WTC11 (cell line): ENCODE measurements at regions of chr1 and their contacts with region 1.

Region 1: DNA sequence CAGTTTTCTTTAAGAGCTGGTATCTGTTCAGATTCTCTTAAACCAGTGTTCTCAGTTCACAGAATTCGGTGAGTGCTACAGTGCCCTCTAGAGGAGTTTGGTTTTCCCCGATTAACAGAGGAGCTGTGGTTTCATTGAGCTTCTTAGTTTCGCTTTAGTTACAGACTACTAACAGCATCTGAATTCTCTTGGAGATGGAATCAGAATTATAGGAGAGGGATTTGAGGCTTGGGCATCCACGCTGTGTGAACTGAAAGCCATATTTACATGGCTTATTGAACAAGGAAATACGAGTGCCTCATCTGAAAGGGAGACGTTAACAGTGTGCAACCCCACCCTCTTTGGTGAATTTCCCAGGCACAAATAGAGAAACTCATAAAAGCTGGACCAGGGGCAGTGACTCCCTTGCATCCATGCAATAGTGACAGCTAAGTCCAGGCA is 202.0 kb downstream of the USH2A start:
- DNase-seq: peak; percentile 41
- ATAC-seq: peak; percentile 98
- H3K4me3 Mint-ChIP-seq: peak overlapping the region; percentile 56
- H3K27ac Mint-ChIP-seq: peak overlapping the region; percentile 80
- H3K4me1 Mint-ChIP-seq: peaks cover 15% of the 10 kb centered on the region
- H3K27me3 Mint-ChIP-seq: no peaks in the 10 kb centered on the region
- CTCF ChIP-seq: no peak

Region 2: GRCh38 chr1:216075339-216075738 is 145.9 kb before region 1 on chr1:
- CTCF ChIA-PET with region 1: no interaction called
- POLR2A ChIA-PET with region 1: no interaction called
- DNase-seq: no peak
- ATAC-seq: peak; percentile 82
- H3K4me3 Mint-ChIP-seq: no peak overlapping the region
- H3K27ac Mint-ChIP-seq: no peak overlapping the region; the same call in 1 of the 2 replicates
- H3K4me1 Mint-ChIP-seq: peaks cover 24% of the 10 kb centered on the region
- H3K27me3 Mint-ChIP-seq: no peaks in the 10 kb centered on the region
- CTCF ChIP-seq: no peak

Region 3: GRCh38 chr1:216175714-216176113 is 45.6 kb before region 1 on chr1:
- CTCF ChIA-PET with region 1: interaction called, 16 read pairs
- POLR2A ChIA-PET with region 1: no interaction called
- DNase-seq: peak; percentile 64
- ATAC-seq: peak; percentile 100
- H3K4me3 Mint-ChIP-seq: no peak overlapping the region
- H3K27ac Mint-ChIP-seq: no peak overlapping the region
- H3K4me1 Mint-ChIP-seq: peaks cover 19% of the 10 kb centered on the region
- H3K27me3 Mint-ChIP-seq: no peaks in the 10 kb centered on the region
- CTCF ChIP-seq: 0 out of 2 replicates have a peak, but pooled peaks have one; percentile 12

Region 4: GRCh38 chr1:216183007-216183406 is 38.3 kb before region 1 on chr1:
- CTCF ChIA-PET with region 1: interaction called, 17 read pairs
- POLR2A ChIA-PET with region 1: no interaction called
- DNase-seq: peak; percentile 15
- ATAC-seq: peak; percentile 95
- H3K4me3 Mint-ChIP-seq: no peak overlapping the region; the same call in 1 of the 2 replicates
- H3K27ac Mint-ChIP-seq: no peak overlapping the region
- H3K4me1 Mint-ChIP-seq: peaks cover 52% of the 10 kb centered on the region
- H3K27me3 Mint-ChIP-seq: no peaks in the 10 kb centered on the region
- CTCF ChIP-seq: no peak

Region 5: DNA sequence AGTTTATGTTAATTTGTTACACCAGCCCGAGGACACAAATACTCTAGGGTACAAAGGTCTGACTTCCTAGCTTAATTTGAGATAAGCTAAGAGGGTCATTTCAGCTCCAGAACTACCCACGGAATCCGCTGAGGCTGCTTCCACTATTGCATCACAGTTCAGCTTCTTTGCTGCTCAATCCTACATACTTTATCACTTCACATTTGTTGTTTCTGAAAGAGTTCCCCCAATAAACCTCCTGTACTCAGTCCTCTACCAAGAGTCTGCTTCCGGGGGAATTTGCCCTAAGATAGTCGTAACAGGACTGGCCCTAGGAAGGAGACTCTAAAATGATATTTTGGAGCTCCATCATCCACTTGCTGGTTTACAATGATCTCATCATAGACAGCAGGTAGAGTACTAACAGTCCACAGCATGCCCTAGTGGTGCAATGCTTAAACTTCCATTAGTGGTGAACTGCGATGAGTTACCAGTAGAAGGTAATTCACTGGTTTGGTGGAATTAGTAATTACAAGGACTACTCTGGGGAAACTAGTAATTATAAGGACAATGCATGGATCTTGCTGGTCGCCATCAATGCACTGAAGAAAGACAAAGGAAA is 27.3 kb before region 1 on chr1:
- CTCF ChIA-PET with region 1: interaction called, 22 read pairs
- POLR2A ChIA-PET with region 1: no interaction called
- DNase-seq: no peak
- ATAC-seq: peak; percentile 94
- H3K4me3 Mint-ChIP-seq: no peak overlapping the region
- H3K27ac Mint-ChIP-seq: no peak overlapping the region
- H3K4me1 Mint-ChIP-seq: peaks cover 10% of the 10 kb centered on the region
- H3K27me3 Mint-ChIP-seq: no peaks in the 10 kb centered on the region
- CTCF ChIP-seq: no peak

Region 6: GRCh38 chr1:216210081-216210480 is 11.2 kb before region 1 on chr1:
- CTCF ChIA-PET with region 1: interaction called, 10 read pairs
- POLR2A ChIA-PET with region 1: no interaction called
- DNase-seq: no peak
- ATAC-seq: no peak
- H3K4me3 Mint-ChIP-seq: no peak overlapping the region
- H3K27ac Mint-ChIP-seq: 0 out of 2 replicates have a peak overlapping the region, but pooled peaks have one; percentile 19
- H3K4me1 Mint-ChIP-seq: no peaks in the 10 kb centered on the region
- H3K27me3 Mint-ChIP-seq: no peaks in the 10 kb centered on the region
- CTCF ChIP-seq: no peak

Region 7: GRCh38 chr1:216238844-216239243 is 17.6 kb after region 1 on chr1:
- CTCF ChIA-PET with region 1: interaction called, 13 read pairs
- POLR2A ChIA-PET with region 1: no interaction called
- DNase-seq: no peak
- ATAC-seq: no peak
- H3K4me3 Mint-ChIP-seq: no peak overlapping the region
- H3K27ac Mint-ChIP-seq: no peak overlapping the region
- H3K4me1 Mint-ChIP-seq: peaks cover 8% of the 10 kb centered on the region
- H3K27me3 Mint-ChIP-seq: no peaks in the 10 kb centered on the region
- CTCF ChIP-seq: no peak

Region 8: GRCh38 chr1:216306830-216307229 is 85.5 kb after region 1 on chr1:
- CTCF ChIA-PET with region 1: interaction called, 10 read pairs
- POLR2A ChIA-PET with region 1: no interaction called
- DNase-seq: no peak
- ATAC-seq: peak; percentile 68
- H3K4me3 Mint-ChIP-seq: no peak overlapping the region
- H3K27ac Mint-ChIP-seq: no peak overlapping the region
- H3K4me1 Mint-ChIP-seq: peaks cover 14% of the 10 kb centered on the region
- H3K27me3 Mint-ChIP-seq: no peaks in the 10 kb centered on the region; the same call in 1 of the 2 replicates
- CTCF ChIP-seq: no peak